Calu3 (cell line): ENCODE measurements at regions of chr1 and their contacts with region 1.

Region 1: GRCh38 chr1:117059678-117060440 is at the start of gene TTF2:
- DNase-seq: peak; percentile 91
- H3K4me3 Mint-ChIP-seq: no peak within 1 kb of the TSS
- H3K27ac Mint-ChIP-seq: no peak within 1 kb of the TSS
- H3K4me1 Mint-ChIP-seq: no peaks in the 10 kb centered on the region
- H3K27me3 Mint-ChIP-seq: no peaks in the 10 kb centered on the region
- CTCF ChIP-seq: no peak
- total RNA-seq, gene TTF2: 46.6 and 49.6 TPM in 2 replicates

Region 2: GRCh38 chr1:116570358-116571200 is 489.3 kb before region 1 on chr1 and contains the start of gene CD58:
- CTCF ChIA-PET with region 1: no interaction called
- intact Hi-C with region 1: loop called (anchors 5 kb)
- DNase-seq: peak; percentile 82
- H3K4me3 Mint-ChIP-seq: peak within 1 kb of the TSS; percentile 87
- H3K27ac Mint-ChIP-seq: peak within 1 kb of the TSS; percentile 95
- H3K4me1 Mint-ChIP-seq: peaks cover 52% of the 10 kb centered on the region
- H3K27me3 Mint-ChIP-seq: no peaks in the 10 kb centered on the region
- CTCF ChIP-seq: peak; percentile 44
- total RNA-seq, gene CD58: 18.9 and 22.9 TPM in 2 replicates

Region 3: DNA sequence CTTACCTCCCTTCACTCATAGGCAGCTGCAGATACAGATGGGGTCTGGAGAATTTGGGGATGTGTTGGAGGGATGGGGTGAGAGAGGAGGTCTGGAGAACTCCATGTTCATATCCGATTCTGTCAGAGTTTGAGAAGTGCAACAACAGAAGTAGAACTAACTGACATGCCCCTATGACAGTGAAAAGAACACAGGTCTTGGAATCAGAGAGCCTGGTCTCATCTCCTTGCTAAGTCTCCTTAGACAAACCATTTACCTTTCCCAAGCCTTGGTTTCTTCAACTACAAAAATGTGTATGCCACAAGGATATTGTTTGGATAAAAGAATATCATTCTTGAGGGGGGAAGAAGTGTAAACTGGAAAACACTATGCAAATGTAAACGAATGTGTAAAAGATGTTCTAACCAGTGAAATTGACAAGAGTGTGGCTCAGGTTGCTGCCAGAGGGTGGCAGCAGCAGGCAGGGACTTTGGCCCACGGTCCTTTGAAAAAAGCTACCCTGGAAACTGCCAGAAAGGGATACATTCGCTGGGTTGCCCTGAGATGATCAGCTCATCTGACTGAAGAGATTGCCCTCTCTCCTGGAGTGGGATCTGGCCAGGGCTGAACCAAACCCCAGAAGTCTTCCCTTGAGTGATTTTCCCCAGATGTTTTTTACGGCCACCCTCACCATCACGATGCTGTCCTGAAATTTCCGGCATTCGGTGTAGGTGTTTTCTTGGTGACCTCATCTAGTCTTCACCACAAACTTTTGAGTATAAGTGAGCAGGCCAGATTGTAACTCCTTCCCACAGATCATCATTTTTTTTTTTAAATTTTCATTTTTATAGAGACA is 322.6 kb before region 1 on chr1:
- CTCF ChIA-PET with region 1: interaction called, 3 read pairs
- intact Hi-C with region 1: loop called (anchors 1 kb)
- DNase-seq: peak; percentile 57
- H3K4me3 Mint-ChIP-seq: no peak overlapping the region
- H3K27ac Mint-ChIP-seq: no peak overlapping the region
- H3K4me1 Mint-ChIP-seq: no peaks in the 10 kb centered on the region
- H3K27me3 Mint-ChIP-seq: peaks cover 20% of the 10 kb centered on the region
- CTCF ChIP-seq: peak; percentile 61

Region 4: DNA sequence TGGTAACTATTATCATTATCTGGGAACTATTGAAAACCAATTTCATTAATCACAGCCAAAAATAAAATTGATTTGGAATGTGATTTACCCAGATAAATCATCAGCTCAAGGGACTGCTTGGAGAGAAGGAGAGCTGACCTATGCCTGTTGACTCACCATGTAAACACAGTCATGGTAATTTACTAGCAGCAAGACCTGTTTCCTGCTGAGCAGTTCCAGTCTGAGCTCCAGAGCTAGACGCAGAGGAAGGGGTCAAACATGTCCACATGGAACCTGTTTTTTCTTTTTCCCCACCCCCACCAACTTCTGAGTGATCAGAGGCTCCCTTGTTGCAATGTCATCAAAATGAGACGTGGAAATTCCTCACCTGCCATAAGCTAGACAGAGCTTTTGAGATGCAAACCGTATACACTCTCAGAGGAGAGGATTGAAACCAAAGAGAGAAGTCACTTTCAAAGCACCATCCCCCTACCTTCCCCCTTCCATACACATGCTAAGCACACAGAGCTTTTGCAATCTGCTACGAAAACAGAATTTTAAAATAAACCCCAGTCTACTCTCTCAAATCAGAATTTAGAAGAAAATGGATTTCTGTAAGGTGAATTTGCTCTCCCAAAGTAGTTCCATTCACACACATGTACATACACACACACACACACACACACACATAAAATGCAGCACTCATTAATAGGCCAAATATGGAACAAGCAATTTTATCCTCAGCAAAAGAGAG is 206.0 kb before region 1 on chr1:
- CTCF ChIA-PET with region 1: no interaction called
- intact Hi-C with region 1: loop called (anchors 10 kb)
- DNase-seq: peak; percentile 71
- H3K4me3 Mint-ChIP-seq: peak overlapping the region; percentile 29
- H3K27ac Mint-ChIP-seq: no peak overlapping the region
- H3K4me1 Mint-ChIP-seq: peaks cover 28% of the 10 kb centered on the region
- H3K27me3 Mint-ChIP-seq: no peaks in the 10 kb centered on the region
- CTCF ChIP-seq: no peak

Region 5: GRCh38 chr1:116919802-116920201 is 140.1 kb before region 1 on chr1:
- CTCF ChIA-PET with region 1: no interaction called
- intact Hi-C with region 1: no loop called
- DNase-seq: no peak
- H3K4me3 Mint-ChIP-seq: no peak overlapping the region
- H3K27ac Mint-ChIP-seq: no peak overlapping the region
- H3K4me1 Mint-ChIP-seq: peaks cover 11% of the 10 kb centered on the region
- H3K27me3 Mint-ChIP-seq: no peaks in the 10 kb centered on the region
- CTCF ChIP-seq: no peak

Region 6: DNA sequence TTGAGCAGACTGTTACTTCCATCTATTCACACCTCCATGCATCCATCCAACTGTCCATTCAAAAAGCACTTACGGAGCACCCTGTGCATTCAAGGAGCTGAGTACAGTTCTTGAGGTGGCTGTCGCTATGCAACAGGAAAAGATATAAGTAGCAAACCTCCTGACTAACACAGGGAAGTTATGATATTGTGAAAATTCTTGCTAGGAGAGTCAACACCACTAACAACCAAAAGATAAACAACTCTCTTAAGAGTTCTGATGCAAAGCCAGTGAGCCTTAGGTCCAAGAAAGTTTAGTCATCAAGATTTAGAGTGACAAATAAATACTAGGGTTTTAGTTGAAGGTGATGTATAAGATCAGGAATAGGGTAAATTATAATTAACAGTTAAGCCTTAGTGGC is 106.2 kb after region 1 on chr1:
- CTCF ChIA-PET with region 1: no interaction called
- intact Hi-C with region 1: no loop called
- DNase-seq: no peak
- H3K4me3 Mint-ChIP-seq: no peak overlapping the region
- H3K27ac Mint-ChIP-seq: no peak overlapping the region
- H3K4me1 Mint-ChIP-seq: peaks cover 31% of the 10 kb centered on the region
- H3K27me3 Mint-ChIP-seq: no peaks in the 10 kb centered on the region
- CTCF ChIP-seq: no peak

Region 7: GRCh38 chr1:117512743-117513321 is 453.0 kb after region 1 on chr1:
- CTCF ChIA-PET with region 1: no interaction called
- intact Hi-C with region 1: loop called (anchors 10 kb)
- DNase-seq: no peak
- H3K4me3 Mint-ChIP-seq: no peak overlapping the region
- H3K27ac Mint-ChIP-seq: no peak overlapping the region
- H3K4me1 Mint-ChIP-seq: no peaks in the 10 kb centered on the region
- H3K27me3 Mint-ChIP-seq: no peaks in the 10 kb centered on the region
- CTCF ChIP-seq: no peak